ENCODE measurements at regions of chr14 and their contacts with region 1.

Region 1: DNA sequence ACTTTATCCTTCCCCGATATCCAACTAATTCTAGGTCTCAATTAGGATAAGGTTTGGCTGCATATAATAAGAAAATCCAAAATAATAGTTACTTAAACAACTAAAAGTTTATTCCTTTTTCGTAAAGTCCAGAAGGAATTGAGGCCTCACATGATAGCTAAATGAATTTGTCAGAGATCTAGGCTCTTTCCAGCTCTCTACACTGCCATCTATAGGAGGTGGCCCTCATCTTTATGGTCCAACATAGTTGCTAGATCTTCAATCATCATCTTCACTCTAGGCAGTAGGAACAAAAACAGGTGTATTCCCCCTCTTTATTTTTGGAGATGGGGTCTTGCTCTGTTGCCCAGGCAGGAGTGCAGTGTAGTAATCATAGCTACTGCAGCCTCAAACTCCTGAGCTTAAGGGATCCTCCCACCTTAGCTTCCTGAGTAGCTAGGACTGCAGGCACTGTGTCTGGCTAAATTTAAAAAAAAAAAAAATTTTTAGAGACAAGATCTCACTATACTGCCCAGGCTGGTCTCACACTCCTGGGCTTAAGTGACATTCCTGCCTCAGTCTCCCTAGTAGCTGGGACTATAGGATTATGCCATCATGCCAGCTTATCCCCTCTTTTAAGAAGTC is 46.5 kb upstream of the SAV1 start:
- DNase-seq: peak; percentile 54
- H3K4me3 ChIP-seq: no peak overlapping the region
- H3K27ac ChIP-seq: no peak overlapping the region
- H3K4me1 ChIP-seq: no peaks in the 10 kb centered on the region
- H3K27me3 ChIP-seq: no peaks in the 10 kb centered on the region
- CTCF ChIP-seq: peak; percentile 80

Region 2: GRCh38 chr14:50542941-50543418 is 171.6 kb before region 1 on chr14:
- CTCF ChIA-PET with region 1: no interaction called
- POLR2A ChIA-PET with region 1: no interaction called
- intact Hi-C with region 1: loop called (anchors 1 kb)
- DNase-seq: peak; percentile 67
- H3K4me3 ChIP-seq: no peak overlapping the region
- H3K27ac ChIP-seq: no peak overlapping the region
- H3K4me1 ChIP-seq: no peaks in the 10 kb centered on the region
- H3K27me3 ChIP-seq: no peaks in the 10 kb centered on the region
- CTCF ChIP-seq: peak; percentile 74

Region 3: DNA sequence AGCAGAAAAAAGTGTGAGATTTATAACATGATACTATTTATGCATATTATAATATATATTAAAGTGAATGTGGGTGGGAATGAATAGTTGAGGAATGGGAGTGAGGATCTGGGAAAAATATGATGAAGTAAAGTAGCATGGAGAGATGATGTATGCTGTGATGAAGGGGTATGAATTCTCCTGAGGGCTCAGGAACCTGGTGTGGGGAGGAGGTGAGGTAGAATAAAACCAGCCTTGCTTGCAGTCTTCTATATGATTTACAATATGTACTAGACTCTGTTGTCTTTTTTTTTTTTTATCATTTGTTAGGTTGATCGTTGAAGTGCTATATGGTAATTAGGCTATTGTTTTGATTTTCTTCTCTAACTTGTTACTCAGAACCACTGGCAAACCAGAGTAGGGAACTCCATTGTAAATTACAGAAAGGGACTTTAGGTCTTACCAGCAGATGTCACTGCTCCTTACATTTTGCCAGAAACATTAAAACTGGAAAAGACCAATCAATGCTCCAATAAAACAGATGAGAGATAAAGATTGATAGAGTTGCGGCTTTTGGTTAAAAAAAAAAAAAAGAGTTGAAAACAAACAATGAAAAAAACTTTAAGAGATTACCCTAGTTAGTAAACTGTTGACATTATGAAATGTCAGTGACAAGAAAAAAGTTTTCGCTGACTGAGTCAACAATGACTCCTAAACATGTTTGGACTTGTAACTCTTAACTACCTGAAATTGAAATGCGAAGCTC is 114.7 kb before region 1 on chr14:
- CTCF ChIA-PET with region 1: no interaction called
- POLR2A ChIA-PET with region 1: no interaction called
- intact Hi-C with region 1: loop called (anchors 5 kb)
- DNase-seq: peak; percentile 68
- H3K4me3 ChIP-seq: no peak overlapping the region
- H3K27ac ChIP-seq: no peak overlapping the region
- H3K4me1 ChIP-seq: no peaks in the 10 kb centered on the region
- H3K27me3 ChIP-seq: no peaks in the 10 kb centered on the region
- CTCF ChIP-seq: peak; percentile 80

Region 4: DNA sequence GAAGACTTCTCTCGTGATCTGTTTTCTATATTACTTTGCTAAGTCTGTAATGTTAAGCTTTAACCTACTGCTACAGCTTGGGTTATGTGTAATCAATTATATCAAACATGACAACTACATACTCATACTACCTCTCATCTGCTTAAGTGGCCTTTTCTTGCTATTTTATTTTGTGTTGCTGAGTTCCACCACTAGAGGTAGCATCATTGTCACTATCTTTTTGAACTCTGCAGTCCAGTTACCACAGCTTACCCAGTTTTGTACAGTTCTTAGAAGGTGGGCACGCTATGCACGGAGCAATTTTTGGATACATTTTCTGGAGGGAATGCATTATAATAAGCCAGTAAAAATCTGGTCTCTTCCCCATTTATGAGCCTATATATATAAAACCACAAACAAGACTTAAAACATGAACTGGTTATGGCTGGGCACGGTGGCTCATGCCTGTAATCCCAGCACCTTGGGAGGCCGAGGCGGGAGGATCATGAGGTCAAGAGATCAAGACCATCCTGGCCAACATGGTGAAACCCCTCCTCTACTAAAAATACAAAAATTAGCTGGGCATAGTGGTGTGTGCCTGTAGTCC is 94.9 kb before region 1 on chr14:
- CTCF ChIA-PET with region 1: interaction called, 6 read pairs
- POLR2A ChIA-PET with region 1: no interaction called
- intact Hi-C with region 1: loop called (anchors 5 kb)
- DNase-seq: peak; percentile 62
- H3K4me3 ChIP-seq: no peak overlapping the region
- H3K27ac ChIP-seq: no peak overlapping the region
- H3K4me1 ChIP-seq: peaks cover 7% of the 10 kb centered on the region
- H3K27me3 ChIP-seq: no peaks in the 10 kb centered on the region
- CTCF ChIP-seq: peak; percentile 74

Region 5: GRCh38 chr14:50656776-50657175 is 57.8 kb before region 1 on chr14:
- CTCF ChIA-PET with region 1: no interaction called
- POLR2A ChIA-PET with region 1: interaction called, 22 read pairs
- intact Hi-C with region 1: no loop called
- DNase-seq: no peak
- H3K4me3 ChIP-seq: no peak overlapping the region
- H3K27ac ChIP-seq: peak overlapping the region; percentile 83
- H3K4me1 ChIP-seq: peaks cover 31% of the 10 kb centered on the region
- H3K27me3 ChIP-seq: no peaks in the 10 kb centered on the region
- CTCF ChIP-seq: no peak

Region 6: GRCh38 chr14:50688875-50689274 is 25.7 kb before region 1 on chr14:
- CTCF ChIA-PET with region 1: no interaction called
- POLR2A ChIA-PET with region 1: no interaction called
- intact Hi-C with region 1: no loop called
- DNase-seq: no peak
- H3K4me3 ChIP-seq: no peak overlapping the region
- H3K27ac ChIP-seq: no peak overlapping the region
- H3K4me1 ChIP-seq: no peaks in the 10 kb centered on the region
- H3K27me3 ChIP-seq: no peaks in the 10 kb centered on the region
- CTCF ChIP-seq: no peak